ENCODE measurements at regions of chr12 and their contacts with region 1.

Region 1: GRCh38 chr12:101773650-101774162 is 34.4 kb upstream of the SYCP3 start:
- DNase-seq: peak; percentile 41
- ATAC-seq: peak; percentile 91
- H3K4me3 ChIP-seq: no peak overlapping the region
- H3K27ac ChIP-seq: no peak overlapping the region
- H3K4me1 ChIP-seq: no peaks in the 10 kb centered on the region
- H3K27me3 ChIP-seq: no peaks in the 10 kb centered on the region
- CTCF ChIP-seq: peak; percentile 80 to 93 (median 91)
- EP300 ChIP-seq: no peak
- POLR2A ChIP-seq: no peak
- RAD21 ChIP-seq: peak; percentile 96

Region 2: GRCh38 chr12:101414533-101415119 is 359.1 kb before region 1 on chr12:
- CTCF ChIA-PET with region 1: interaction called, 10 read pairs
- POLR2A ChIA-PET with region 1: no interaction called
- RAD21 ChIA-PET with region 1: interaction called, 4 read pairs
- SMC1A ChIA-PET with region 1: interaction called, 4 read pairs
- in situ Hi-C with region 1: no loop called
- intact Hi-C with region 1: no loop called
- DNase-seq: peak; percentile 13
- ATAC-seq: peak; percentile 81
- H3K4me3 ChIP-seq: no peak overlapping the region
- H3K27ac ChIP-seq: no peak overlapping the region
- H3K4me1 ChIP-seq: no peaks in the 10 kb centered on the region
- H3K27me3 ChIP-seq: no peaks in the 10 kb centered on the region
- CTCF ChIP-seq: peak; percentile 48 to 66 (median 51); a peak in 5 of 6 replicates
- EP300 ChIP-seq: no peak
- POLR2A ChIP-seq: no peak
- RAD21 ChIP-seq: peak; percentile 87

Region 3: GRCh38 chr12:101619846-101620761 is 153.6 kb before region 1 on chr12:
- CTCF ChIA-PET with region 1: no interaction called
- POLR2A ChIA-PET with region 1: no interaction called
- RAD21 ChIA-PET with region 1: no interaction called
- SMC1A ChIA-PET with region 1: no interaction called
- in situ Hi-C with region 1: no loop called
- intact Hi-C with region 1: no loop called
- DNase-seq: no peak
- ATAC-seq: no peak
- H3K4me3 ChIP-seq: no peak overlapping the region
- H3K27ac ChIP-seq: no peak overlapping the region
- H3K4me1 ChIP-seq: no peaks in the 10 kb centered on the region
- H3K27me3 ChIP-seq: no peaks in the 10 kb centered on the region; a peak in 1 of 4 replicates
- CTCF ChIP-seq: no peak
- EP300 ChIP-seq: no peak
- POLR2A ChIP-seq: no peak
- RAD21 ChIP-seq: no peak

Region 4: GRCh38 chr12:101792051-101792931 is 18.6 kb after region 1 on chr12:
- CTCF ChIA-PET with region 1: interaction called, 15 read pairs
- POLR2A ChIA-PET with region 1: no interaction called
- RAD21 ChIA-PET with region 1: no interaction called
- SMC1A ChIA-PET with region 1: interaction called, 7 read pairs
- in situ Hi-C with region 1: no loop called
- intact Hi-C with region 1: no loop called
- DNase-seq: no peak
- ATAC-seq: peak; percentile 38; the same call in 1 of the 3 replicates
- H3K4me3 ChIP-seq: no peak overlapping the region
- H3K27ac ChIP-seq: no peak overlapping the region
- H3K4me1 ChIP-seq: peaks cover 10% of the 10 kb centered on the region
- H3K27me3 ChIP-seq: no peaks in the 10 kb centered on the region
- CTCF ChIP-seq: peak; percentile 15 to 36 (median 19); a peak in 4 of 6 replicates
- EP300 ChIP-seq: no peak
- POLR2A ChIP-seq: no peak
- RAD21 ChIP-seq: peak; percentile 17; the same call in 1 of the 2 replicates

Region 5: DNA sequence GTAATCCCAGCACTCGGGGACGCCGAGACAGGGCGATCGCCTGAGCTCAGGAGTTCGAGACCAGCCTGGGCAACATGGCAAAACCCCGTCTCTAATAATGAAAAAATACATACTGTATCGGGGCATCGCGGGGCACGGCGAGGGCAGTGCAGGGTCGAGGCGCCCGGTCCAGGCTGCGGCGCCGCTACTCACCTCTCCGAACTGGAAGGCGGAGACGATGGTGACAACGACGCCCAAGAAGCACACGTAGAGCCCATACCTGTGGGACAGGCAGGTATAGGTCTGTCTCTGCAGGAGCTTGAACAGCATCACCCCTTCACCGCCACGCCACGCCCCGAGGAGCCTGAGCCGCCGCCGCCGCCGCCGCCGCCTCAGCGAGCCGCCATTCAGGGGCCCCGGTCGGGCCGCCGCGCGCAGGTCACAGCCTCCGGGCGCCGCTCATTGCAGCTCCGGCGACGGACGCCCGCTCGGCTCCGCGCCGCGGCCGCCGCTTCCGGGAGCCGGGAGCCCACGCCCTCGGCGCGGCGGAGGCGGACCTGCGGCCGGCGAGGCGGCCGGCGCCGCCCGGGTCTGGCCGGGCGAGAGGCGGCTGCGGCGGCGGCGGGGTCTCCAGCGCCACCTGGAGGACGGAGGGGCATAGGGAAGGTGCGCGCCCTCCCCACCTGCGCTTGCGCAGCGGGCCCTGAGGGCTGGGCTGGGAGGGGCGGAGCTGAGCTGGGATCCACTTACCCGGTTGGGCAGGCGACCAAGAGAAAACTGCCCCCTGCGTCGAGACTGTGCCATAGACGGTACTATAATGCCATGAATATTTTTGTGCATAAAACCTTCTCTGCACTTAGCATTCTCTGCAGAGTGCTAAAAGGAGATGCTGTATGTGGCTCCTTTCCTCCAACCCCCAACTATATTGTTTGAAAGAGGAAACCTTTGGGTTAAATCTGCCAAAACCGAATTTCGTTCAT is 56.9 kb after region 1 on chr12 and contains the start of gene GNPTAB:
- CTCF ChIA-PET with region 1: interaction called, 179 read pairs
- POLR2A ChIA-PET with region 1: interaction called, 8 read pairs
- RAD21 ChIA-PET with region 1: interaction called, 142 read pairs
- SMC1A ChIA-PET with region 1: interaction called, 123 read pairs
- in situ Hi-C with region 1: loop called (anchors 10 kb)
- intact Hi-C with region 1: loop called (anchors 2 kb)
- DNase-seq: peak; percentile 80
- ATAC-seq: peak; percentile 89
- H3K4me3 ChIP-seq: peak within 1 kb of the TSS; percentile 94
- H3K27ac ChIP-seq: peak within 1 kb of the TSS; percentile 81
- H3K4me1 ChIP-seq: peaks cover 7% of the 10 kb centered on the region
- H3K27me3 ChIP-seq: no peaks in the 10 kb centered on the region
- CTCF ChIP-seq: peak; percentile 75 to 82 (median 77)
- EP300 ChIP-seq: 0 out of 4 replicates have a peak, but pooled peaks of 1 of the 2 experiments have one; percentile 22
- POLR2A ChIP-seq: peak; percentile 84
- RAD21 ChIP-seq: no peak
- polyA plus RNA-seq, gene GNPTAB: 9.8 to 10.5 TPM

Region 6: GRCh38 chr12:101909646-101910045 is 135.9 kb after region 1 on chr12:
- CTCF ChIA-PET with region 1: interaction called, 3 read pairs
- POLR2A ChIA-PET with region 1: interaction called, 3 read pairs
- RAD21 ChIA-PET with region 1: interaction called, 10 read pairs
- SMC1A ChIA-PET with region 1: interaction called, 6 read pairs
- in situ Hi-C with region 1: no loop called
- intact Hi-C with region 1: no loop called
- DNase-seq: no peak
- ATAC-seq: peak; percentile 82
- H3K4me3 ChIP-seq: peak overlapping the region; percentile 43; the same call in 1 of the 2 replicates
- H3K27ac ChIP-seq: peak overlapping the region; percentile 88
- H3K4me1 ChIP-seq: peaks cover 31% of the 10 kb centered on the region
- H3K27me3 ChIP-seq: no peaks in the 10 kb centered on the region
- CTCF ChIP-seq: no peak
- EP300 ChIP-seq: peak in 1 of 2 experiments; percentile 22; a peak in 1 of 4 replicates
- POLR2A ChIP-seq: no peak
- RAD21 ChIP-seq: no peak

Region 7: DNA sequence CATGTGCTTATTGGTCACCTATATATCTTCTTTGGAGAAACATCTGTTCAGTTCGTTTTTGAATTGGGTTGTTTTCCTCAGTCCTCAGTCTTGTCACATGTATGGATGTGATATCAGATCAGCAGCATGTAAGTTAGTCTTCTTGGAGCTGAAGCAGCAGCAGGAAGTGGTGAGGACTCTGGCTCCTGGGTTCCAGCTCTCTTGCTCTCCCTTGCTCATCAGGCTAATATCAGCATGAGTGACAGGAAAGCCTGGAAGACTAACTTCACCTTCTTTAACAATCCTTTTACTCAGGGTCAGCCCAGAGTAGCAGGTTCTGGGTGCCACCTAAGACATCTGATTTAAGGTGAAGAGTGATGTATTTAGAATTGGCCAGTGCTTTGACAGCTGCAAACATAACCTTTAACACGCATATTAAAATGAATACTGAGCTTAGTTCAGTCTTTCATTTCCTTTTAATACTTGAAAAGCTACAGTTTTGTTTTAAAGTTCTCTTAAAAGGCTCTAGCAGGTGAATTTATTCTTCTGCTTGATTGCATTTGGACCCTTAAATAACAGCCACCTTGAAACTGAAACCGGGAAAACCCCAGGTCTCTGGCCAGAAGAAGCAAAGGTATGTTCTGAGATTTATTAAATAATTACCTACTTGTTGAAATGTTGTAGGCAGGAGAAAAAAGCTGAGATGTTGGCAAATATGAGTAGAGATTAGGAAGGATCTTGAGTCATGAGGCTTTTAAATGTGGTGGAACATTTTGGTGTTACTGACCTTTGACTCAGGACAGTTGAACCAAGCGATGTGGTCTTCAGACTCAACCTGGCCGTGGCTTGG is 158.0 kb after region 1 on chr12:
- CTCF ChIA-PET with region 1: interaction called, 7 read pairs
- POLR2A ChIA-PET with region 1: no interaction called
- RAD21 ChIA-PET with region 1: interaction called, 4 read pairs
- SMC1A ChIA-PET with region 1: interaction called, 4 read pairs
- in situ Hi-C with region 1: no loop called
- intact Hi-C with region 1: loop called (anchors 5 kb)
- DNase-seq: peak; percentile 82
- ATAC-seq: peak; percentile 26
- H3K4me3 ChIP-seq: peak overlapping the region; percentile 71
- H3K27ac ChIP-seq: peak overlapping the region; percentile 98
- H3K4me1 ChIP-seq: peaks cover 62% of the 10 kb centered on the region
- H3K27me3 ChIP-seq: no peaks in the 10 kb centered on the region
- CTCF ChIP-seq: no peak
- EP300 ChIP-seq: peak; percentile 78 to 85; a peak in 3 of 4 replicates
- POLR2A ChIP-seq: peak; percentile 74
- RAD21 ChIP-seq: no peak

Region 8: GRCh38 chr12:102811110-102811737 is 1037.5 kb after region 1 on chr12:
- CTCF ChIA-PET with region 1: interaction called, 11 read pairs
- POLR2A ChIA-PET with region 1: no interaction called
- RAD21 ChIA-PET with region 1: interaction called, 8 read pairs
- SMC1A ChIA-PET with region 1: interaction called, 3 read pairs
- in situ Hi-C with region 1: no loop called
- intact Hi-C with region 1: loop called (anchors 10 kb)
- DNase-seq: no peak
- ATAC-seq: peak; percentile 74
- H3K4me3 ChIP-seq: no peak overlapping the region
- H3K27ac ChIP-seq: no peak overlapping the region
- H3K4me1 ChIP-seq: no peaks in the 10 kb centered on the region
- H3K27me3 ChIP-seq: no peaks in the 10 kb centered on the region; a peak in 1 of 4 replicates
- CTCF ChIP-seq: peak; percentile 63 to 66 (median 64); a peak in 5 of 6 replicates
- EP300 ChIP-seq: no peak
- POLR2A ChIP-seq: no peak
- RAD21 ChIP-seq: peak; percentile 77

Measured in GM12878 (cell line).